Astrocyte of the cerebellum (primary cell): ENCODE measurements at regions of chr9 and their contacts with region 1.

Region 1: DNA sequence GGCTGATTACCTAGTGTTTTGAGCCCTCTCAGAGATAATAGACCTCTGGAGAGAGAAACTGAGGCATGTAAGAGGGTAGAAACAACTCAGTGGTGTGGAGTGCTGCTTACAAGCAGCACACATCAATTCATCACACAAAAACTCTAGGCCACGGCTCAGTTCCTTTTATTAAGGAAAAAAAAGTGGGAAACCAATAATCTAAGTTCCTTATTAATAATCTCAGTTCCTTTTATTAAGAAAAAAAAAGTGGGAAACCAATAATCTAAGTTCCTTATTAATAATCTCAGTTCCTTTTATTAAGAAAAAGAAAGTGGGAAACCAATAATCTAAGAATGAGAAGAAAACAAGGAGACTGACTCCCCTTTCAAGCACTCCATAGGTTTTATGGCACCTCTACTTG is 28.0 kb downstream of the TXNDC8 start:
- DNase-seq: no peak
- H3K4me3 ChIP-seq: no peak overlapping the region
- CTCF ChIP-seq: no peak

Region 2: DNA sequence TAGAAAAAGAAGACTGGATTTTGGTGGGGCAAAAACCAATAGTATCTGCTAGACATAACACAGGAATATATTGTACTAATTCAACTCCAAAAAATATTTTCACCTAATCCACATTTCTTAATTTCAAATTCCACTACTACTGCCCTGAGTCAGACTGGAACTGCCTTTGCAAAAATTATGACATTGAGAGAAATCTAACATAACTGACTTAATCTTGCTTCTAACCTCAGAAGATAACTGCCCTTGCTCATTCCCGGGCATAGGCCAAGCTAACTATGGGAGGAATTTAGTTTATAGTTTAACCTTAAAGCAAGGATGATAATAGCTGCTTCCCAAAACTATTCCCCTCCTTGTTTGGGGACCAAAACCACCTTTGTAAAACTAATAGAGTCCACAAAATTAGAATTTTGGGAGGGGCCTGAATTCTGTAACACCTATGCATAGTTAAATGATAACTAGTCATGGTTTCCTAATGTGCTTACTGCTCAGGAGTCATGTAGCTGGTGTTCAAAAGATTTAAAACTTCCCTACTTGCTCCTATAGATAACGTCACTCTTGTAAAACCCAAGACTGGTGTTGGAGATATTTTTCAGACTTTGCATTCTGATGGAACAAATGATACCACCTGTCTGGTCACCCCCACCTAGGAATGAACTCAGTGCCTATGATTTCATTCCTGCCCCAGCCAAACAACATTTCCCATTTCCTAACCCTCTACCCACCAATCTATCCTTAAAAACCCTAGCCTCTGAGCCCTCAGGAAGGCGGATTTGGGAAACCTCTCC is 39.3 kb before region 1 on chr9:
- in situ Hi-C with region 1: loop called (anchors 5 kb)
- DNase-seq: no peak
- H3K4me3 ChIP-seq: no peak overlapping the region
- CTCF ChIP-seq: no peak

Region 3: GRCh38 chr9:110351009-110351467 is 41.4 kb after region 1 on chr9:
- in situ Hi-C with region 1: no loop called
- DNase-seq: peak; percentile 58
- H3K4me3 ChIP-seq: no peak overlapping the region
- CTCF ChIP-seq: no peak

Region 4: GRCh38 chr9:110583237-110583636 is 273.6 kb after region 1 on chr9:
- in situ Hi-C with region 1: no loop called
- DNase-seq: no peak
- H3K4me3 ChIP-seq: no peak overlapping the region
- CTCF ChIP-seq: no peak